ENCODE measurements at regions of chr17 and their contacts with region 1.

Region 1: DNA sequence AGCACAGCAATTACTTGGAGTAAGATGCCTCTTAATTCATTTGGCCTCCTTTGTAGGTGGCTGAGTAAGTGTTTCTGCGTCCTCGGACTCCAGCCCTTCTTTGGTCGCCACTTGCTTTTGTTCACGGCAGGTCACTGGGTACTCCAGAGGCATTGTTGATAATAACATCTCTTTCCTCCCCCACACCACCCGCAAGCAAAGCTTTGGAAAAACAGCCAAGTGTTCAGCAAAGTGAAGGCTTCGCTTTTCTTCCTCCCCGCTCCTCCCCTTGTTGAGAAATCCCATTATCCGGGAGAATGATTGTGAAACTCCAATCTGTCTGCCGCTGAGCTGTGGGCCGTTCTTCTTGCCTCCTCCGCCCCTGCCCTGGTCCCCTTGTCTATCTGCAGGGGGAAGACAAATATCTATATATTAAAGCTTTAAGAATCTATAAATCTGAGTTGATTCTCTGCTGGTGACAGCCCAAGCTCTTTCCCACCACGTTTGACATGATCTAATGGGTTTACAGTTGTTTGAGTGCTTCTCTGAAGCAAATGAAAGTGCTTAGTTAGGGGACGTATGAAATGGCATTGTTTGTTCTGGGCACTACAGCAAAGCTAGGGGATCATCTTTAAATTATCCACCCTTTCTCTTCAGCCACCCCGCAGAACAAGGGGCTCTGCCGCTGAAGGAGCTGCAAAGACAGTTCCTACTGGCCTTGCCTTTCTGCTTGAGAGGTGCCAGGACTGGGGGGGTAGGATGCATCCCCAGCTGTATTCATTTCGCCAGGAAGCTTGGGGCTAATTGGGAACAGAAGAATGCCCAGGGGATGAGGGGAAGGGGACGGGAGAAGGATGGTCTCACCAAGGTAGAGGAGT is 167.1 kb downstream of the CCDC182 start:
- DNase-seq: peak in 2 of 5 donors; percentile 45 to 53
- ATAC-seq: peak; percentile 37 to 75 (median 56)
- H3K4me3 ChIP-seq: peak overlapping the region in 9 of 12 donors; percentile 5 to 44 (median 34)
- H3K27ac ChIP-seq: peak overlapping the region in 11 of 12 donors; percentile 35 to 73 (median 52)
- H3K4me1 ChIP-seq: peaks cover 0 to 31% (median 16%) of the 10 kb centered on the region in 12 donors
- H3K27me3 ChIP-seq: no peaks in the 10 kb centered on the region
- CTCF ChIP-seq: no peak
- POLR2A ChIP-seq: no peak

Region 2: DNA sequence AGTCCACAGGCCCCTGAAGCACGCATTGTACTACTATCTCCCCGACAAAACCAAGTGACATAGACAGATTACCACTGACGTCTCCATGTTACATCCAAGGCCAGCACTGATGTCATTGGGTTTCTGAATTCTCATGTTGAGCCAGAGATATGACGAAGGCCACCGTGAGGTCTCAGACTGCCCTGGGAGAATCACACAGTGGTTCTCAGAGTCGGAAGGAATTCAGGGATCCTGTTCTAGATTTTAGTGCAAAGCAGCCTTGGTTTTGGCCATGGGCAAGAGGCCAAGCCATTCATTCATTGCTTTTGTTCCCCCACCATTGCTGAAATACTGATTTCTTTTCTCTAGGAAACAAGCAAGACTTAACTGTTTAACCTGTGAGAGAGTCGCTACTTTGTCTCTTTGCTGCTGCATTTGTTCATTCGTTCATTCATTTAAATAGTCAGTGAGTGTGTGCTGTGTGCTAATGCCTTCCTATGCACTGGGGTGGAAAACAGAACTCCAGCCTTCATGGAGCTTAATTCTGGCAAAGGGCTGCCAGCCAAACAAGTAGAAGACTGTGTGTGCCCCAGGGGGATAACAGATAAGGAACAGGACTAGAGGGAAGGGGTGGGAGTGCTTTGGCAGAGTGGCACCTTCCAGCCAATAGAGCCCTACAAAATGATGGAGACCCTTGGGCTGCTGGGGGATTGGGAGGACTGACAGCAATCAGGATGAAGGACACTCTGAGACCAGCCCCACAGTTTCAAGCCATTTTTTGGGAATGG is 99.3 kb before region 1 on chr17:
- intact Hi-C with region 1: loop called in 1 of 10 experiments (anchors 10 kb)
- DNase-seq: peak in 3 of 5 donors; percentile 50 to 70 (median 61)
- ATAC-seq: peak; percentile 70 to 90 (median 83)
- H3K4me3 ChIP-seq: no peak overlapping the region
- H3K27ac ChIP-seq: peak overlapping the region in 9 of 12 donors; percentile 28 to 84 (median 63)
- H3K4me1 ChIP-seq: peaks cover 0 to 83% (median 44%) of the 10 kb centered on the region in 12 donors
- H3K27me3 ChIP-seq: no peaks in the 10 kb centered on the region
- CTCF ChIP-seq: no peak
- POLR2A ChIP-seq: no peak

Region 3: DNA sequence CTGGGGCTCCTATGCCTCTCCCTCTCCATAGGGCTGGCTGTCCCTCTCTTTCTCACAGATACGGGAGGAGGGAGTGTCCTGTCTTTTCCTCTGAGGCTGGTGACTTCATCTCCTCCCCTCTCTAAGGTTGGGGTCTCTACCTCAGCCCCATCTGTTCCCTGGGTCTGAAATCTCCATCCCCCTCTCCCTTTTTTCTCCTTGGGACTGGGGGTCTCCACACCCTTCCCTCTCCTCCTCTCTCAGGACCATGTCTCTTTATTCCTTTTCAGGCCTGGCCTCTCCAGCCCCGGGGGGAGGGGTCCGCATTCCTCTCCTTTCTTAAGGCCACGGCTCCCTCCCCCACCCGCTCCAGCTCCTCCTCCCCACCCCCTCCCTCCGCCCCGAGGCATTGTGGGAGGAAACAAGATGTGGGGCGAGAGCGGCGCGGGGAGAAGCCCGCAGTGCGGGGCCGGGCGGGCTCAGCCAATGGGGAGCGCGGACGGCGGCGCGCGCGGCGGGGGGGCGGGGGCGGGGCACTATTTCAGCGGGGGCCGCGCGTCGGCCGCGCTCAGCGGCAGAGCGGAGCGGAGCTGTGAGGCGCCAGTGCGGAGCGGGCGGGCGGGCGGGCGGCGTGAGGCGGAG is 505.0 kb after region 1 on chr17 and contains the start of gene DYNLL2:
- intact Hi-C with region 1: no loop called
- DNase-seq: peak; percentile 93 to 97 (median 96)
- ATAC-seq: peak; percentile 91 to 93 (median 92)
- H3K4me3 ChIP-seq: peak within 1 kb of the TSS; percentile 68 to 100 (median 98)
- H3K27ac ChIP-seq: peak within 1 kb of the TSS; percentile 53 to 99 (median 97)
- H3K4me1 ChIP-seq: peaks cover 5 to 44% (median 38%) of the 10 kb centered on the region in 12 donors
- H3K27me3 ChIP-seq: peaks cover 0 to 3% (median 0%) of the 10 kb centered on the region in 9 donors
- CTCF ChIP-seq: no peak
- POLR2A ChIP-seq: no peak
- total RNA-seq, gene DYNLL2: 41.4 to 102 (median 74.0) TPM

Measured in heart left ventricle (tissue), 16 donors.